PC-3 (cell line): ENCODE measurements at regions of chr20 and their contacts with region 1.

Region 1: GRCh38 chr20:49323622-49324238 is 45.9 kb upstream of the ZNFX1 start:
- DNase-seq: peak; percentile 87
- ATAC-seq: peak; percentile 72
- H3K4me3 ChIP-seq: no peak overlapping the region
- H3K27ac ChIP-seq: no peak overlapping the region
- H3K4me1 ChIP-seq: peaks cover 8% of the 10 kb centered on the region; the same call in 1 of the 2 replicates
- H3K27me3 ChIP-seq: peaks cover 25% of the 10 kb centered on the region
- CTCF ChIP-seq: peak; percentile 69

Region 2: DNA sequence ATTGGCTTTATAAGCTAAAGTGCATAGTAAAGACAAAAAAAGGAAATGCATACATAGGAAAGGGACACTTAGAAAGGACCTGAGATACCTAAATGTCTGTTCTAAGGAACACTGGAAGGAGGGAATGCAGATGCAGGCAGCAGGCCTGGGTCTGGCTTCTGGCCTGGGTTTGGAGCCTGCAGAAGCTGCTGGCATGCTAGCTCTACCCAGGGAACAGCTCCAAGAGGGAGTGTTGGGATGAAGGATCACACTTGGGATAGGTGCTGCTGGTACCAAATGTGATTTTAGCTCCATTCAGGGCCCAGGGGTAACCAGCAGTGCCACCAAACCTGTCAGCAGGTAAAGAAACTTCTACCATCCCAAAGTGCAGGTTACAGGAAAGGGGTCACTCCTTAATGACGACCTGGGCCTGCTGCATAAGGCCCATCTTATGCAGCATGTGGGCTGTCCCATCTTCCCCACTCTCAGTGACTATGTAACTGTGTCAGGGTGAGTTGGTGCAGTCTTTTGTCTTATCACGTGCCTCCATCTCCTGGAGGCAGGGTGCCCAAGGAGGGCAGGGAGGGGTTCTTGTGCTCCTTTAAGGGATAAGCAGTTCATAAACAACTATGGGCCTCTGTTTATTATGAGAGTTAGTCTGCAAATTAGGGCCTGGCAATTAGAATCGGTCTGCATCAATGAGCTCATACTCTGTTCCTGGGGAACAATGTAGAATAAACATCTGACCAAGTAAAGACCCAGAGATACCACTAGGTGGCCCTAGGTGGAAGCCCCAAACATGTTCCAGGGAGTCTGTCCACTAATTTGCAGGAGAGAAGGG is 77.6 kb before region 1 on chr20:
- CTCF ChIA-PET with region 1: interaction called, 17 read pairs
- POLR2A ChIA-PET with region 1: interaction called, 5 read pairs
- intact Hi-C with region 1: loop called (anchors 1 kb)
- DNase-seq: peak; percentile 70
- ATAC-seq: peak; percentile 89
- H3K4me3 ChIP-seq: no peak overlapping the region
- H3K27ac ChIP-seq: no peak overlapping the region
- H3K4me1 ChIP-seq: no peaks in the 10 kb centered on the region
- H3K27me3 ChIP-seq: no peaks in the 10 kb centered on the region
- CTCF ChIP-seq: peak; percentile 90

Region 3: GRCh38 chr20:49259284-49259683 is 64.4 kb before region 1 on chr20:
- CTCF ChIA-PET with region 1: interaction called, 13 read pairs
- POLR2A ChIA-PET with region 1: interaction called, 13 read pairs
- intact Hi-C with region 1: loop called (anchors 5 kb)
- DNase-seq: no peak
- ATAC-seq: peak; percentile 38
- H3K4me3 ChIP-seq: no peak overlapping the region
- H3K27ac ChIP-seq: peak overlapping the region; percentile 62
- H3K4me1 ChIP-seq: peaks cover 19% of the 10 kb centered on the region
- H3K27me3 ChIP-seq: no peaks in the 10 kb centered on the region
- CTCF ChIP-seq: no peak

Region 4: GRCh38 chr20:49278036-49278817 is 45.5 kb before region 1 on chr20 and contains the start of gene ZNFX1:
- CTCF ChIA-PET with region 1: interaction called, 6 read pairs
- POLR2A ChIA-PET with region 1: no interaction called
- intact Hi-C with region 1: loop called (anchors 5 kb)
- DNase-seq: peak; percentile 100
- ATAC-seq: peak; percentile 88
- H3K4me3 ChIP-seq: peak within 1 kb of the TSS; percentile 89
- H3K27ac ChIP-seq: peak within 1 kb of the TSS; percentile 85
- H3K4me1 ChIP-seq: peaks cover 54% of the 10 kb centered on the region
- H3K27me3 ChIP-seq: no peaks in the 10 kb centered on the region
- CTCF ChIP-seq: peak; percentile 20; the same call in 1 of the 2 replicates
- total RNA-seq, gene ZNFX1: 18.8 and 18.9 TPM in 2 replicates